ENCODE measurements at regions of chr7 and their contacts with region 1.

Region 1: DNA sequence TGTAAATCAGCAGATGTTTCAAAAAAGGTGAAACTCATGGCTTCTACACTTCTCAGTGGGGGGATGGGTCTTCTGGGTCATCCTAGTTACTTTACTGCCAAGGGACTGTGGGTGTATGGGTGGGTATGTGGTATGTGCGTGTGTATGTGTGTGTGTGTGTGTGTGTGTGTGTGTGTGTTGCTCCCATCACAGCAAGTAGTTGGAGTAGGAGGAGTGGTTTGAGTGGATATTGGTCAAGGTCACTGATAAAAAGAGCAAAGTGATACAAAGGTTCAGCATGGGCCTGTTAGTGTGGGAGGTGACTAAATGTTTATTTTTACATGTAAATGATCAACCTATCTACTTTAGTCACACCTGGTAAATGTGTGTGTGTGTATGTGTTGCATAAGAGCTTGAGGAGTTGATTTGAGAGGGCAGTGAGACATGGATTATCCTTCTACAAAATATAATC is 11.8 kb upstream of the COBL start:
- DNase-seq: no peak
- H3K4me3 ChIP-seq: no peak overlapping the region
- H3K4me3 Mint-ChIP-seq: no peak overlapping the region
- H3K27ac Mint-ChIP-seq: no peak overlapping the region
- H3K4me1 ChIP-seq: peaks cover 28% of the 10 kb centered on the region
- H3K4me1 Mint-ChIP-seq: peaks cover 15% of the 10 kb centered on the region
- H3K27me3 ChIP-seq: no peaks in the 10 kb centered on the region
- H3K27me3 Mint-ChIP-seq: no peaks in the 10 kb centered on the region
- CTCF ChIP-seq: no peak

Region 2: DNA sequence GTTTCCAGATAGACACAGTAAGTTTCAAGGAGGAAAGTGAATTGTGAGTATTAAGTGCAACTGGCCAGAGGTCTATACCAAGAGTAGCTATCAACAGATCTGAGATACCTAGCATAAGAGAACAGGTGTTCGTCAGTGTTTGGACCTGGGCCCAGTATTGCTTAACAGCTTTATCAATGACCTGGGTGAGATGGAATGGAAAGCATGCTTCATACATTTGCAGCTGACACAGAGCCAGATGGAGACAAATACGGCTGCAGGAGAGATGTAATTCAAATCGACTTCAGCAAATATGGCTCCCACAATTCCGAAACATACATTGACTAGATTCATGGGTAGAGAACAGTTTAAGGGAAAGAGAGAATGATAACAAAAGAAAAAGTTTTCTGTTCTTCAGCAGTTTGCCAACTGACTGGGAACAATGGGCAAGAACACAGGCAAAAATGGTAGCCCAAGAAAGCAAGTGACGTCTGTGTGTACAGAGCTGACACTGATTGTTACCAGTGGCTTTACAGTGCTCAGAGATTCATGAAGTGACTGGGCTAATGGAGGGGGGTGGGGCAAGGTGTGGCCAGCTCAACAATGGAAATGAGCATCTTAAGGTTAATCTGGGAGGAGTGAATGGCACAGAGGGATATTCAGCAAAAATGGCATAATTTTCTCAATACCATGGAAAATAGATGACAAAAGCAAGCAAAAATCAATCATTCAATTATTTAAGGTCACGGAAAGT is 16.2 kb after region 1 on chr7:
- CTCF ChIA-PET with region 1: interaction called, 3 read pairs
- POLR2A ChIA-PET with region 1: no interaction called
- intact Hi-C with region 1: loop called (anchors 1 kb)
- DNase-seq: peak; percentile 67 to 73
- H3K4me3 ChIP-seq: no peak overlapping the region
- H3K4me3 Mint-ChIP-seq: peak overlapping the region; percentile 51
- H3K27ac Mint-ChIP-seq: peak overlapping the region; percentile 76
- H3K4me1 ChIP-seq: peaks cover 60% of the 10 kb centered on the region
- H3K4me1 Mint-ChIP-seq: peaks cover 39% of the 10 kb centered on the region
- H3K27me3 ChIP-seq: no peaks in the 10 kb centered on the region
- H3K27me3 Mint-ChIP-seq: no peaks in the 10 kb centered on the region
- CTCF ChIP-seq: no peak

Measured in Caco-2 (cell line).